Lower leg skin (tissue), 4 donors: ENCODE measurements at regions of chr3 and their contacts with region 1.

Region 1: GRCh38 chr3:34669490-34669889 is 871.1 kb downstream of the PDCD6IP start:
- DNase-seq: no peak
- H3K4me3 ChIP-seq: no peak overlapping the region
- CTCF ChIP-seq: no peak
- POLR2A ChIP-seq: no peak

Region 2: DNA sequence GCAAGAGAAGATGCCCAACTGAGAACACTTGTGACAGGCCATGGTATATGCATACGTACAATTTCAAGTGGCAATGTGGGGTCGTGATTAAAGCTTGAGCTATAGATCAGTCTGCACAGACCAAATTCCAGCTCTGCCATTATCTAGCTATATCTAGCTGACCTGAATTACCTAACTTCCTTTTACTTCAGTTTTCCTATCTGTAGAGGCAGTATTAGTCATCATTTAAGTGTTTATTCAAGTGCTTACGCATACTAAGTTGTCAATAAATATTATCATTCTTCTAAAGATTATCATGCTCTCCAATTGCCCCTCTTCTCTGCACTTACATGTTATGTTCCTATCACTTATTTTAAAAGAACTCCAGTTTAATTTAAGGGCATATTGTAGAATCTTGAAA is 1057.7 kb after region 1 on chr3:
- intact Hi-C with region 1: loop called (anchors 5 kb)
- DNase-seq: no peak
- H3K4me3 ChIP-seq: no peak overlapping the region
- CTCF ChIP-seq: no peak
- POLR2A ChIP-seq: no peak